ENCODE measurements at regions of chr2 and their contacts with region 1.

Region 1: GRCh38 chr2:67650291-67651133 is 253.4 kb downstream of the ETAA1 start:
- DNase-seq: peak; percentile 65
- H3K4me3 ChIP-seq: no peak overlapping the region
- H3K27ac ChIP-seq: no peak overlapping the region
- H3K4me1 ChIP-seq: no peaks in the 10 kb centered on the region
- H3K27me3 ChIP-seq: no peaks in the 10 kb centered on the region
- CTCF ChIP-seq: peak; percentile 55 to 67
- POLR2A ChIP-seq: no peak

Region 2: DNA sequence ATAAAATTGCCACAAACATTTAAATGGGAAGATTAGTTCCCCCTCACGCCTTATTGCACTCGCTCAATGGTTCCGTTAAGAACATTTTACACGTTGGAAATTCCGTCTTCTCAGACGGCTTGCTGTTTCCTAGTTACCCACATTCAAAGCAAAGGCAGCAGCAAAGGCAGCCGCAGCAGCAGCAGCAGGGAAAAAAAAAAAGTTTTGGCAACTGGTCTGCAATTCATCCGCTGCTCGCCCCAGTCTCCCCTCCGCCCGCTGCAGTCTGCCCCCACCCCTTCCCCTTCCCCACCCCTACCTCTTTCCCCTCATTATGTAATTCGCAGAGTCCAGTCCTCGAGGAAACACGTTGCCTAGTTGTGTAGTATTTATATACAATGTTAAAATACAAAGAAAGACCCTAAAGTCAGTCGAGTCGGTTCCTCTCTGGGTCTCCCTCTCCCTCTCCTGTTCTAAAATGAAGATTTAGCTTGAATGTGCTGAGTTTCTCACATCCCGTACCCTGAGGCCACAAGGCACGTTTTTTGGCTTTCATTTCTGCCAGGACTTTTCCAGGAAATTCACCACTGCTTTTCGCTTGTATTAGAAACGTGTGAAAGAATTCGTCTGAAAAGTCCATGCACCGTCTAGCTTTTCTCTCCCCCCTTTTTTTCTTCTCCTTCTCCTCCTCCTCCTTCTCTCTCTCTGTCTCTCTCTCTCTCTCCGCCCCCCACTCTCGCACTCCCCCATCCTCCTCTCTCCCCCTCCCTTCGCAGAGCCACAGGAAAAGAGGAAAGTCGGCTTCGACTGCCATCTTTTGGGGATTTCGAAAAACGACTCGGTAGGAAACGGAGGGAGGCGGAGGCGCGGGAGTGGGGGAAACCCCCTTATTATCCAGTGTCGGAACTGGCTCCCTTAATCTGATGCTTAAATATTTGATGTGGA is 1075.5 kb before region 1 on chr2:
- CTCF ChIA-PET with region 1: interaction called, 20 read pairs
- POLR2A ChIA-PET with region 1: no interaction called
- dilution Hi-C with region 1: no loop called
- intact Hi-C with region 1: loop called (anchors 1 kb)
- DNase-seq: peak; percentile 81
- H3K4me3 ChIP-seq: peak overlapping the region; percentile 56 to 92 (median 85)
- H3K27ac ChIP-seq: peak overlapping the region; percentile 74
- H3K4me1 ChIP-seq: peaks cover 18% of the 10 kb centered on the region
- H3K27me3 ChIP-seq: peaks cover 32 to 38% of the 10 kb centered on the region in 2 experiments
- CTCF ChIP-seq: peak; percentile 45 to 60
- POLR2A ChIP-seq: no peak

Region 3: GRCh38 chr2:67476809-67477790 is 173.4 kb before region 1 on chr2:
- CTCF ChIA-PET with region 1: interaction called, 9 read pairs
- POLR2A ChIA-PET with region 1: no interaction called
- dilution Hi-C with region 1: no loop called
- intact Hi-C with region 1: loop called (anchors 2 kb)
- DNase-seq: peak; percentile 68
- H3K4me3 ChIP-seq: no peak overlapping the region
- H3K27ac ChIP-seq: no peak overlapping the region
- H3K4me1 ChIP-seq: no peaks in the 10 kb centered on the region
- H3K27me3 ChIP-seq: no peaks in the 10 kb centered on the region
- CTCF ChIP-seq: peak; percentile 39 to 40
- POLR2A ChIP-seq: no peak

Region 4: DNA sequence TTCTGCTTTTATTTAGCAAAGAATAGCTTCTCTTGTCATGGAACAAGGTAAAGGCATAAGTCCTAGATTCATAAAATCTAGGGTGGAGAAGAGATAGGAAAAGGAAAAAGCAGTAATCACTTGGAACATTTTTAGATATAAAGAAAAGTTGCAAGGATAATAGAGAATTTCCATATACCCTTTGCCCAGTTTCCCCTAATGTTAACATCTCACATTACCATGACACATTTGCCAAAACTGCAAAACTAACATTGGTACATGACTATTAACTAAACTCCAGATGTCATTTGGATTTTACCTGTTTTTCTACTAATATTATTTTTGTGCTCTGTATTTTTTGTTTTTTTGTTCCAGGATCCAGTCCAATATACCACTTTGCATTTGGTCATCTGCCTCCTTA is 11.7 kb after region 1 on chr2:
- CTCF ChIA-PET with region 1: interaction called, 10 read pairs
- POLR2A ChIA-PET with region 1: no interaction called
- dilution Hi-C with region 1: no loop called
- intact Hi-C with region 1: no loop called
- DNase-seq: no peak
- H3K4me3 ChIP-seq: no peak overlapping the region
- H3K27ac ChIP-seq: no peak overlapping the region
- H3K4me1 ChIP-seq: no peaks in the 10 kb centered on the region
- H3K27me3 ChIP-seq: no peaks in the 10 kb centered on the region
- CTCF ChIP-seq: no peak
- POLR2A ChIP-seq: no peak

Region 5: GRCh38 chr2:67719351-67719750 is 68.8 kb after region 1 on chr2:
- CTCF ChIA-PET with region 1: no interaction called
- POLR2A ChIA-PET with region 1: no interaction called
- dilution Hi-C with region 1: no loop called
- intact Hi-C with region 1: no loop called
- DNase-seq: no peak
- H3K4me3 ChIP-seq: no peak overlapping the region
- H3K27ac ChIP-seq: no peak overlapping the region
- H3K4me1 ChIP-seq: no peaks in the 10 kb centered on the region
- H3K27me3 ChIP-seq: no peaks in the 10 kb centered on the region
- CTCF ChIP-seq: no peak
- POLR2A ChIP-seq: no peak

Region 6: DNA sequence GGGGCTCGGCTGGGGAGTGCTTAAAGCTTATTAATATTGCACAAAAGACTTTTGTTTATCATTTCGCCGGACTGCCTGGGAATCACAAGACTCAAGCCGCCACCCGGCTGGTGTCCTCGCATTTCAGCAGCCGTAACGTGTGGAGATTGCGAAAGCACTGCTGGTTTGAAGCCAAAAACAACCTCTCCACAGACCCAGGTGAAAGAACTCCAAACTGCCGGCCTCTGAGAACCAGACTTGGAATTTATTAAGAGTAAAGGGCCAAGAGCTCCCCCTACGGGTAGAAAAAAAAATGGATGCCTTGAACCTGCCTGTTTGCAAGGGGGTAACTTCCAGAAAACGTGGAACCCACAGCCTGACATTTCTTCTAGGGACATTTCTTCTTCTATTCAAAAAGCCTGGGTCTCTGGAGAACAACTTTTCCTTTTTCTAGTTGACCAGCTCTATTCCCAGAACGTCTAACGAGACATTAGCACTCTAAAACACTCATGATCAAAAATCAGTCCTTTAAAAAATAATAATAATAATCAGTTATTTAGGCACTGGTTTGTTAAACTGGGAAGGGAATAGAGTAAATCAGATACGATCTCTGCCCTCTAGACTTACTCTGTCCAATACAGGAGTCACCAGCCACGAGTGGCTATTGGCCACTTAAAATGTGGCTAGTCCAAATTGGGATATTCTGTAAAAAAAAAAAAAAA is 196.0 kb after region 1 on chr2:
- CTCF ChIA-PET with region 1: interaction called, 19 read pairs
- POLR2A ChIA-PET with region 1: no interaction called
- dilution Hi-C with region 1: no loop called
- intact Hi-C with region 1: loop called (anchors 5 kb)
- DNase-seq: peak; percentile 96
- H3K4me3 ChIP-seq: peak overlapping the region in 1 of 3 experiments; percentile 14
- H3K27ac ChIP-seq: peak overlapping the region; percentile 44
- H3K4me1 ChIP-seq: peaks cover 6% of the 10 kb centered on the region
- H3K27me3 ChIP-seq: no peaks in the 10 kb centered on the region
- CTCF ChIP-seq: peak; percentile 68 to 71
- POLR2A ChIP-seq: no peak

Measured in endothelial cell of umbilical vein (primary cell).